Endothelial cell of umbilical vein (primary cell): ENCODE measurements at regions of chr11 and their contacts with region 1.

Region 1: GRCh38 chr11:28674433-28675103 is 566.4 kb downstream of the METTL15 start:
- DNase-seq: peak; percentile 8
- H3K4me3 ChIP-seq: no peak overlapping the region
- H3K27ac ChIP-seq: no peak overlapping the region
- H3K4me1 ChIP-seq: no peaks in the 10 kb centered on the region
- H3K27me3 ChIP-seq: no peaks in the 10 kb centered on the region
- CTCF ChIP-seq: peak; percentile 22 to 37
- POLR2A ChIP-seq: no peak

Region 2: GRCh38 chr11:28464252-28464867 is 210.2 kb before region 1 on chr11:
- CTCF ChIA-PET with region 1: no interaction called
- POLR2A ChIA-PET with region 1: no interaction called
- dilution Hi-C with region 1: no loop called
- intact Hi-C with region 1: loop called (anchors 10 kb)
- DNase-seq: no peak
- H3K4me3 ChIP-seq: no peak overlapping the region
- H3K27ac ChIP-seq: no peak overlapping the region
- H3K4me1 ChIP-seq: peaks cover 21% of the 10 kb centered on the region
- H3K27me3 ChIP-seq: no peaks in the 10 kb centered on the region
- CTCF ChIP-seq: no peak
- POLR2A ChIP-seq: no peak